ENCODE measurements at regions of chr6 and their contacts with region 1.

Region 1: GRCh38 chr6:73329201-73329600 is 24.9 kb downstream of the DPPA5 start:
- DNase-seq: no peak
- H3K4me3 ChIP-seq: no peak overlapping the region
- H3K27ac ChIP-seq: no peak overlapping the region
- H3K4me1 ChIP-seq: no peaks in the 10 kb centered on the region
- H3K27me3 ChIP-seq: no peaks in the 10 kb centered on the region
- CTCF ChIP-seq: no peak

Region 2: DNA sequence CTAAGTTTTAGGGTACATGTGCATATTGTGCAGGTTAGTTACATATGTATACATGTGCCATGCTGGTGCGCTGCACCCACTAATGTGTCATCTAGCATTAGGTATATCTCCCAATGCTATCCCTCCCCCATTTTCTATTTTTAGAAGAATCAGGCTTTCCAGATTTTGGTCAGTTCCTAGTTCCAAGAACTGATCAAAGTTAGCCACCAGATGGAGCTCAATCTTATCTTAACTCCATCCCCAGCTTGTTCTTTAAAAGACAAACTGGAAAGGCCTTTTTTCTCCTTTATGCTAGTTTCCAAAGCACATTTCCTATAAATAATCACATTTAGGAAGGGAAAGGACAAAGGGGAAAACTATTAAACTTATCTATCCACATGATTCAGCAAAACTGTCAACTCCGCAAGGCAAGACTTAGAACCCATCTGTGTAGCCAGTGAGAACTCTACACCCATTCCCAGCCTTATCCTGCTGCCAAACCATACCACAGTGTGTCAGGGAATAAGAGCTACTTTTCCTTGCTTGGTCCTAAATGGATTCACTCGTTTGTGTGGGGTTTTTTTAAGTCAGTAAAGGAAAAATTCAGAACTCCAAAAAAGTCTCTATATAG is 43.4 kb before region 1 on chr6:
- intact Hi-C with region 1: loop called (anchors 5 kb)
- DNase-seq: no peak
- H3K4me3 ChIP-seq: no peak overlapping the region
- H3K27ac ChIP-seq: no peak overlapping the region
- H3K4me1 ChIP-seq: no peaks in the 10 kb centered on the region
- H3K27me3 ChIP-seq: no peaks in the 10 kb centered on the region
- CTCF ChIP-seq: peak; percentile 13

Region 3: GRCh38 chr6:73537677-73538076 is 208.5 kb after region 1 on chr6:
- intact Hi-C with region 1: no loop called
- DNase-seq: no peak
- H3K4me3 ChIP-seq: no peak overlapping the region
- H3K27ac ChIP-seq: no peak overlapping the region
- H3K4me1 ChIP-seq: no peaks in the 10 kb centered on the region
- H3K27me3 ChIP-seq: no peaks in the 10 kb centered on the region
- CTCF ChIP-seq: no peak

Measured in colonic mucosa (tissue), 4 donors.